ENCODE measurements at regions of chr11 and their contacts with region 1.

Region 1: DNA sequence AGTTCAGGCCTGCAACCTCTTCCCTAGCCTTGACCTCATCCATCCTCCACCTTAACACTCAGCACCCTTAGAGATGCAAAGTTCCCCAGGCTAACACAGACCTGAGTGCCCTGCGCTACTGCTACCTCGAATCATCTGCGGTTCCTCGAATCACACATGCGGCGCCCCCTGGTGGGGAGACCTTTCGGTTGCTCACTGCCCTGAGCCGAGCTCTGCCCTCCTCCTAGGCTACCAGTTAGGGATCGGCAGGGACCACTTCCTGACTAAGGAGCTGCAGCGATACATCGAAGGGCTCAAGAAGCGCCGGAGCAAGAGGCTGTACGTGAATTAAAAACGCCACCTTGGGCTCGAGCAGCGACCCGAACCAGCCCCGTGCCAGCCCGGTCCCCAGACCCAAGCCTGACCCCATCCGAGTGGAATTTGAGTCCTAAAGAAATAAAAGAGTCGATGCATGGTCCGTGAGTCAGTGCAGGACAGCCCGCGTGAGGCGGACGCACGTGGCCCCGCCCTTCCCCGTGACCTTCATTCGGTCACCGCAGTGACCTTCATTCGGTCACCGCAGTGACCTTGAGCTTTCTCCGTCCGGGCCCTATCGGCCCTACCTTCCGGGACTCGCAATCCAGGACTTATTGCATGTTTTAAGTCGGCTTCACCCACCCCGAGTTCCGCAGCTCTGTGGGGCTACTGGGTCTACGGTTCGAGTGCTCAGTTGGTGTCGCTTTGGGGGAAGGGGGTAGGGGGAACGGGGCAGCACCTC is 830 bp upstream of the ESRRA start:
- DNase-seq: peak; percentile 88
- H3K4me3 Mint-ChIP-seq: peak overlapping the region; percentile 91
- H3K27ac Mint-ChIP-seq: peak overlapping the region; percentile 99
- H3K4me1 Mint-ChIP-seq: peaks cover 21% of the 10 kb centered on the region
- H3K27me3 Mint-ChIP-seq: peaks cover 14% of the 10 kb centered on the region

Region 2: DNA sequence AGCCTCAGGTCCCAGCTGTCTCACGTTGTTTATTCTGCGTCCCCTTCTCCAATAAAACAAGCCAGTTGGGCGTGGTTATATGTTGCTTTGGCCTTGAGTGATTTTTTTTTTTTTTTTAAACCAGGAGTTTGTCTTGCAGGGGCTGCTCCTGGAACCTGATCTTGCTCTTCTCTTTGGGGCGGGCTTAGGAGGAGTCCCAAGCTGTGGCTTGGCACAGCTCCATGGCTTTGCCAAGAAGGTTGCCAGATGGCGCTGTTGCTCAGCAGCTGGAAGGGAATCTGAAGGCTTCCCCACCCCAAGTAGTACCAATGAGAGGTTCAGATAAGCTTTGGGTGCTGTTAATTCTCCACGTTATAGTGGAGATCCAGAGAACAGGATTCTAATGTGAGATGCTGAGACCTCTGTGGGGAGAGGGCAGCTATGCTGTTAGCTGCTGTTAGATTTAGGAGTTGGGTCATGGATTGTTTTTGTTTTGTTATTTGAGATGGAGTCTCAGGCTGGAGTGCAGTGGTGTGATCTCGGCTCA is 100.0 kb before region 1 on chr11:
- intact Hi-C with region 1: loop called (anchors 1 kb)
- DNase-seq: peak; percentile 67
- H3K4me3 Mint-ChIP-seq: peak overlapping the region; percentile 75
- H3K27ac Mint-ChIP-seq: peak overlapping the region; percentile 81
- H3K4me1 Mint-ChIP-seq: peaks cover 21% of the 10 kb centered on the region
- H3K27me3 Mint-ChIP-seq: no peaks in the 10 kb centered on the region

Region 3: GRCh38 chr11:64246871-64247728 is 57.4 kb before region 1 on chr11 and contains the start of gene PPP1R14B:
- intact Hi-C with region 1: loop called (anchors 2 kb)
- DNase-seq: peak; percentile 78
- H3K4me3 Mint-ChIP-seq: peak within 1 kb of the TSS; percentile 91
- H3K27ac Mint-ChIP-seq: peak within 1 kb of the TSS; percentile 88
- H3K4me1 Mint-ChIP-seq: peaks cover 28% of the 10 kb centered on the region
- H3K27me3 Mint-ChIP-seq: no peaks in the 10 kb centered on the region
- total RNA-seq, gene PPP1R14B: 262 and 273 TPM in 2 replicates

Region 4: DNA sequence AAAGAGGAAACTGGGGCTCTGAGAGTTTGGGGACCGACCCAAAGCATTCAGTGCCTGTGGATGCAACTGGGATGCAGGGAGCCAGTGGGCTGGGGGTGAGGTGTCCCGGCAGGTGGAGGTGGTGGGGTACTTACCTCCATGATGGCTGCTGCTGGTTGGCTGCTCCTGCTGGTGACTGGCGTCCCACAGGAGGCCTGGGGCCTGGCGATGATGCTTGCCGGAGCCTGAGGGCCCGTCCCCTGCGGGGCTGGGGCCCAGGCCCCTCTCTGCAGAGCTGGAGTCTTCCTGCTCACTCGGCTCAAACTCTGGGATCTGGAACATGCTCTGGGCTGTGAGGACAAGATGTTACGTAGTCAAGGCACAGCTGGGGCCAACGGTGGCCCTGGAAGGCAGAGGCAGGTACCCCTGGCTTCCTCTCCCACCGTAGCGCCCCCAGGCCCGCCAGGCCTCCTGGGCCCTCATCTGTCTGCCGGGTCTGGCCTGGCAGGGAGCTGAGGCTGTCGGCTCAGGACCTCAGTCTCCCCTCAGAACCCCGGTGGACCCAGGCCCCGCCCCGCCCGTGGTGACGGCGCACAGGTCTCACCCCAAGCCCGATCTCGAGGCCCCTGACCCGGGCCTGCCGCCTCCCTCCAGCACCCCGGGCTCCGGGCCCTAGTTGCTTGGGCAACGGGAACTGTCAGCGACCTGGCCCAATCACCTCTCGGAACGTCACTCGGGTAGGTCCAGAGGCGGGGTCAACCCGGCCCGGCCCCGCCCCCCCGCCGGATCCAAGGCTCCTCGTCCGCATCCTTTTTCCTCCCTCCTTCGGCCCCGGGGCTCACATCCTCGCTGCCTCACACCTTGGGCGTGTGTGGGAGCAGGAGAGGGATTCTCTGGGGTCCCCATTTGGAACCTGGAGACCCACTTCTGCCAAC is 20.2 kb before region 1 on chr11 and contains the start of gene BAD:
- intact Hi-C with region 1: loop called (anchors 2 kb)
- DNase-seq: peak; percentile 88
- H3K4me3 Mint-ChIP-seq: peak within 1 kb of the TSS; percentile 85
- H3K27ac Mint-ChIP-seq: peak within 1 kb of the TSS; percentile 93
- H3K4me1 Mint-ChIP-seq: peaks cover 9% of the 10 kb centered on the region
- H3K27me3 Mint-ChIP-seq: no peaks in the 10 kb centered on the region
- total RNA-seq, gene BAD: 33.2 and 34.7 TPM in 2 replicates

Region 5: DNA sequence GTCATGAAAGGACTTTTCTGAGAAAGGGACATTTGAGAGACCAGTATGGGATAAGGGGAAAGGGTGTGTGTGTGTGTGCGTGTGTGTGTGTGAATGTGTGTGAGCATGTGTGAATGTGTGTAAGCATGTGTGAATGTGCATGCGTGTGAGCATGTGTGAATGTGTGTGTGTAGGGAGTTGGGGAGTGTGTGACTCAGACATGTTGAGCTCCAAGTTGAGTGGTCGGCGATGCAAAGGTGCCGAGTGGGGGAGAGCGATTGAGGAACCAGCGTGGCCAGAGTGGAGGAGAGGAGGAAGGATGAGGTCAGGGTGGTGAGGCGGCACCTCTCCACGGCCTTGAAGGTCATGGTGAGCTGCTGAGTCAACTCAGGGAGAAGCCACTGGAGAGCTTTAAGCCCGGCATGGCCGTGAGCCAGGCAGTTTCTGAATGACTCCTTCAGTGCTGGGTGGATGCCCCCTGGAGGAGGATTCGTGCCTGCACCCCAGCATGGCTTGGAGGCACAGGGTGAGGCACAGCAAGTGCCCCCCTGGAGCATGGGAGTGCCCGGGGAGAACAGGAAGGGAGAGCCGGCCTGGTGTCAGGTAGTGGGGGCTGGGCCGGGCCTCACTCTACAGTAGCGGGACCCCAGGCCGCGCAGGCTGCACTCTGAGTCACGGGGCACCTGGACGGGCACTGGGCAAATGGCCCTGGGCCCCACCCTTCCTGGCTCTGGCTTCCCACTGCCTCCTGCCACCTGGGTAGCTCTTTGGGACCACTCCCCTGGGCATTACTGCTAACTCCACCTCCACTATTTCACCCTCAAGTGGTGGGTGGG is 27.3 kb after region 1 on chr11:
- intact Hi-C with region 1: loop called (anchors 2 kb)
- DNase-seq: peak; percentile 65
- H3K4me3 Mint-ChIP-seq: no peak overlapping the region
- H3K27ac Mint-ChIP-seq: peak overlapping the region; percentile 83
- H3K4me1 Mint-ChIP-seq: peaks cover 15% of the 10 kb centered on the region
- H3K27me3 Mint-ChIP-seq: no peaks in the 10 kb centered on the region

Region 6: DNA sequence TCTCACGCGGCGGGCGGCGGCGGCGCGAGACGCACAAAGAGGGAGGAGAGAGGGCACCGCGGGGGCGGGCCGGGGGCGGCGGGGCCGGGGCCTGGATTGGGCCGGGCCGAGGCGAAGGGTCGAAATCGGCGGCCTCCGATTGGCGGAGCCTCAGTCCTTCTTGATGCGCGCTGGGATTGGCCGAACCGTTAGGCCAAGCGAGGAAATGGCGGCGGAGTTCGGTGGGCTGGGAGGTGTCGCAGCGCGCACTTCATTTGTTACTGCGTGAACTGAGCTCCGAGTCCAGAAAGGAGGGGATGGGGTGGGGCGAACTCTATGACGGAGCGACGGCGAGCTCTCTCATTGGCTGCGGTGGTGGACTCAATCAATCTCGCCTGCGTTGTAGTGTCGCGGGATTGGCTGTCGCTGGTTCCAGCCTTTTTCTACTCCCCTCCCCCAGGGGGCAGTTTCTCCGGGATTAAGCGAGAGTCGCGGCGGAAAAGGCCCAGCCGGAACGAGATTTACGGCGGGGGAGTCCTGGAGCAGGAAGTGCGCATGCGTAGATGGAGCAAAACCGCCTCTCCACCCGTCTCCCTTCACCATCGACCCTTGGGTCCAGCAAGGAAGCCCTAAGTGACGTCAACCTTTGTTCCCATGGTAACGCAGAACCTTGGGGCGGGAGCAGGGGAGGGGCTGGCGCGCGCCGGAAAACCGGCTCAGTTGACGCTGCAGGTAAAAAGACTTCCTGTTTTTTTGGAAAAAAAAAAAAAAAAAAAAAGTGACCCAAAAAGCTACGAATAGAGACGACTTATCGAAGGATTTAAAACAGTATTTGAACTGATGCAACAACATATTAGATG is 474.2 kb after region 1 on chr11 and contains the start of gene SF1:
- intact Hi-C with region 1: loop called (anchors 1 kb)
- DNase-seq: peak; percentile 100
- H3K4me3 Mint-ChIP-seq: peak within 1 kb of the TSS; percentile 89
- H3K27ac Mint-ChIP-seq: peak within 1 kb of the TSS; percentile 99
- H3K4me1 Mint-ChIP-seq: peaks cover 46% of the 10 kb centered on the region
- H3K27me3 Mint-ChIP-seq: no peaks in the 10 kb centered on the region
- total RNA-seq, gene SF1: 460 and 461 TPM in 2 replicates